ENCODE measurements at regions of chr6 and their contacts with region 1.

Region 1: DNA sequence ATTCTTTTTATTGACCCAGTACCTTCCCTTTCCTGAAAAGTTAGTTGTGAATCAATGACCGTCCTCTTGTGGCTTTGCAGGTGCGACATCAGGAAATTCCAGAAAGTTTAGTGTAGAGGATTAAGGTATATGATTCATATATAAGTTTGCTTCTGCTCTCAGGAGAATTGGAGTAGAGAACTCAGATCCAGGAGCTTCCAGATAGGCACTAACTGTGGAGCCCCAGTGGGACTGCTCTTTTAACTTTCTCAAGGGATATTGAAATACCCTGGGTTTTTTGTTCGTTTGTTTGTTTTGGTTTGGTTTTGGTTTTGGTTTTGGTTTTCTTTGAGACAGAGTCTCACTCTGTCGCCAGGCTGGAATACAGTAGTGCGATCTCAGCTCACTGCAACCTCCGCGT is 9.5 kb downstream of the TAAR2 start:
- DNase-seq: peak; percentile 87
- ATAC-seq: peak; percentile 77
- H3K4me3 ChIP-seq: peak overlapping the region; percentile 58
- H3K27ac ChIP-seq: peak overlapping the region; percentile 88
- H3K4me1 ChIP-seq: peaks cover 57% of the 10 kb centered on the region
- H3K27me3 ChIP-seq: no peaks in the 10 kb centered on the region
- CTCF ChIP-seq: no peak

Region 2: DNA sequence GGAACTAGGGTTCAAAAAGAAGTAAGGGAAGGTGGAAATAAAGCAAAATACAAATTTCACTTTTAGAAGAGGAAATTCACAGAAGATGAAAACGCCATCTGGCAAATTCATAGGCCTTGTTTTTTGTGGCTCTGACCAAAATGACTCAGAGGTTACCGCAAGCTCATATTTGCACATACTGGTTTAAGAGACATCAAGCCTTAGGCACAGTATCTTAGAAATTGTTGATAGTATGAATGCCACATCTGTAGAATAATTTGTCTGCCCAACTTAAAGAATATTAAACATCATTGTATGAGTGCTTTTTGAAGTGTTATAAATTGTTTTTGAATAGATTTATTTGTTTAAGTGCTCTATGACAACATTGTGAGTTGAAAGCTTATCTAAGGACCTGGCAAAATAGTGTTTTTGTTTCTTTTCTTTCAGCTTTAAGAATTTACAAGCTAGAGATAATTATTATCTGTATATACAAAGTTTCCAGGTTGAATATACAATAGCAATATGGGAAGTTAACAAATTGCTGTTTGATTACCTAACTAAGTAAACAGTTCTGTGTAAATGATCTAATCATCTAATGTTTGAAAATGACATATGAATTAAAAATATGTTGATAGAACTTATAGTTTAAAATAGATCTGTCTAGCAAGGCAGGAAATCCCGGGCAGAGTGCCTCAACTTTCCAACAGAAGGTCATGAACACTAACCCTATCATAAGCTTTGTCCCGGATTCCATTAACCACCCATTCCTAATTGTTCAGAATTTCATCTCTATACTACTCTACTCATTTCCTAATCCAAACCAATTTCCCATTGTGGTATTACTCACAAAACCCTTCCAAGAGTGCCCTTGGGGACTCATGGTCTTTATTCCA is 34.0 kb after region 1 on chr6:
- CTCF ChIA-PET with region 1: no interaction called
- POLR2A ChIA-PET with region 1: no interaction called
- intact Hi-C with region 1: loop called (anchors 2 kb)
- DNase-seq: peak; percentile 75
- ATAC-seq: peak; percentile 94
- H3K4me3 ChIP-seq: no peak overlapping the region
- H3K27ac ChIP-seq: peak overlapping the region; percentile 9
- H3K4me1 ChIP-seq: peaks cover 15% of the 10 kb centered on the region
- H3K27me3 ChIP-seq: no peaks in the 10 kb centered on the region
- CTCF ChIP-seq: no peak

Region 3: GRCh38 chr6:132683543-132683942 is 69.0 kb after region 1 on chr6:
- CTCF ChIA-PET with region 1: no interaction called
- POLR2A ChIA-PET with region 1: no interaction called
- intact Hi-C with region 1: no loop called
- DNase-seq: peak; percentile 70
- ATAC-seq: no peak
- H3K4me3 ChIP-seq: no peak overlapping the region
- H3K27ac ChIP-seq: peak overlapping the region; percentile 60
- H3K4me1 ChIP-seq: peaks cover 32% of the 10 kb centered on the region
- H3K27me3 ChIP-seq: no peaks in the 10 kb centered on the region
- CTCF ChIP-seq: no peak